ENCODE measurements at regions of chr3 and their contacts with region 1.

Region 1: GRCh38 chr3:122697952-122698620 is 17.4 kb downstream of the PARP14 start:
- DNase-seq: no peak
- ATAC-seq: no peak
- H3K4me3 Mint-ChIP-seq: no peak overlapping the region
- H3K27ac Mint-ChIP-seq: no peak overlapping the region
- H3K4me1 Mint-ChIP-seq: peaks cover 13% of the 10 kb centered on the region
- H3K27me3 Mint-ChIP-seq: no peaks in the 10 kb centered on the region

Region 2: GRCh38 chr3:122687298-122687697 is 10.8 kb before region 1 on chr3:
- CTCF ChIA-PET with region 1: no interaction called
- POLR2A ChIA-PET with region 1: interaction called, 14 read pairs
- DNase-seq: no peak
- ATAC-seq: no peak
- H3K4me3 Mint-ChIP-seq: no peak overlapping the region
- H3K27ac Mint-ChIP-seq: peak overlapping the region; percentile 39
- H3K4me1 Mint-ChIP-seq: peaks cover 50% of the 10 kb centered on the region
- H3K27me3 Mint-ChIP-seq: no peaks in the 10 kb centered on the region

Region 3: DNA sequence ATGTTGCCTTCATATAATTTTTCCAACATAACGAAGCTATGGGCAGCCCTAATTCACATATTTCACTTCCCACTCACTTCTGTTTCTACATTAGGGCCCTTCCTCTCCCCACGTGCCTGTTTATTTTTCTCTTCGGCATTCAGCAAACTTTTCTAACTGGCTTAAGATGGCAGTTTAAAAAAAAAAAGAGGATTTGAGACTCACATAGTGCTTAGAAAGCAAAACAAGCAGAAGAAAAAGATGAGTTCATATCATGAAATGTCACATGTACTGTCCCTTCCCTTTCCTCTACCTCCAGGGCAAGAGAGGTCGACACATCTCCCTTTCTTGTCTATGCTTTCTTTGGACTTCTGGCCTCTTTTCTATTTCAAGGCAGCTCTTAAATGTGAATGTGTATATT is 127.4 kb after region 1 on chr3:
- CTCF ChIA-PET with region 1: no interaction called
- POLR2A ChIA-PET with region 1: no interaction called
- DNase-seq: no peak
- ATAC-seq: no peak
- H3K4me3 Mint-ChIP-seq: no peak overlapping the region
- H3K27ac Mint-ChIP-seq: no peak overlapping the region
- H3K4me1 Mint-ChIP-seq: no peaks in the 10 kb centered on the region
- H3K27me3 Mint-ChIP-seq: no peaks in the 10 kb centered on the region